ENCODE measurements at regions of chr13 and their contacts with region 1.

Region 1: DNA sequence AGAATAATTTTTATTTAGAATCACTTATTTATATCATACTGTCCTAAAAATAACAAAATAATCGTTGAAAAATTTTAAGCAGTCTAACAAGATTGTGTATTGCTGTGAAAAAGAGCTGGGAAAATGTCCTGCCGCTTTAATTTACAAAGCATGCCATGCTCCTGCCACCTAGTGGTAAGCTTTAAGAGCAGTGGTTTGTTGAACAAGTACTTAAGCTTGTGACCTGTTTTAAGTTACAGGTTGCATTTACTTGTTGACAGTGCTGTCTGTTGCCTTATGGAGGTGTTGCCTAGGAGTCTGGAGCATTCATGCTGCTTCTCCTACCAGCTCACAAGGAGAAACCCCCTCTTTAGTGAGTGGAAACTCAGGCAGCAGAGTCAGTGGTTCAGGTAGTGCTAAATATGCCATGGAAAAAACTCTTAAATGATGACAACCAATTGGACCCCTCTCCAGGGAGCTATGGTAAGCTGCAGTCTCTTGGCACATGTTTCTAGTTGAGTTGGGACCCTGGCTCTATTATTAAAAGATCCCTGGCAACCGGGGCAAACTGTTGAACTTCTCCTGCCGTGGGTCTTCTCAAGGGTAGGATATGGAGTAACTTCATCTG is 68.4 kb downstream of the SPATA13 start:
- DNase-seq: peak; percentile 67
- H3K4me3 ChIP-seq: no peak overlapping the region
- H3K27ac ChIP-seq: no peak overlapping the region
- H3K4me1 ChIP-seq: peaks cover 5% of the 10 kb centered on the region
- H3K27me3 ChIP-seq: no peaks in the 10 kb centered on the region
- CTCF ChIP-seq: peak; percentile 78 to 82
- POLR2A ChIP-seq: no peak

Region 2: GRCh38 chr13:23915308-23915707 is 313.6 kb before region 1 on chr13:
- CTCF ChIA-PET with region 1: interaction called, 20 read pairs
- POLR2A ChIA-PET with region 1: no interaction called
- dilution Hi-C with region 1: no loop called
- intact Hi-C with region 1: loop called (anchors 2 kb)
- DNase-seq: no peak
- H3K4me3 ChIP-seq: no peak overlapping the region
- H3K27ac ChIP-seq: no peak overlapping the region
- H3K4me1 ChIP-seq: no peaks in the 10 kb centered on the region
- H3K27me3 ChIP-seq: peaks cover 10 to 12% of the 10 kb centered on the region in 2 experiments
- CTCF ChIP-seq: no peak
- POLR2A ChIP-seq: no peak

Region 3: GRCh38 chr13:24020375-24020830 is 208.6 kb before region 1 on chr13:
- CTCF ChIA-PET with region 1: interaction called, 155 read pairs
- POLR2A ChIA-PET with region 1: no interaction called
- dilution Hi-C with region 1: no loop called
- intact Hi-C with region 1: loop called (anchors 2 kb)
- DNase-seq: peak; percentile 67
- H3K4me3 ChIP-seq: no peak overlapping the region
- H3K27ac ChIP-seq: no peak overlapping the region
- H3K4me1 ChIP-seq: no peaks in the 10 kb centered on the region
- H3K27me3 ChIP-seq: no peaks in the 10 kb centered on the region
- CTCF ChIP-seq: peak; percentile 62 to 74
- POLR2A ChIP-seq: no peak

Region 4: GRCh38 chr13:24027494-24027893 is 201.5 kb before region 1 on chr13:
- CTCF ChIA-PET with region 1: interaction called, 14 read pairs
- POLR2A ChIA-PET with region 1: interaction called, 3 read pairs
- dilution Hi-C with region 1: no loop called
- intact Hi-C with region 1: no loop called
- DNase-seq: no peak
- H3K4me3 ChIP-seq: no peak overlapping the region
- H3K27ac ChIP-seq: no peak overlapping the region
- H3K4me1 ChIP-seq: no peaks in the 10 kb centered on the region
- H3K27me3 ChIP-seq: peaks cover 5% of the 10 kb centered on the region in 2 experiments
- CTCF ChIP-seq: no peak
- POLR2A ChIP-seq: no peak

Region 5: GRCh38 chr13:24135674-24136300 is 93.2 kb before region 1 on chr13:
- CTCF ChIA-PET with region 1: interaction called, 11 read pairs
- POLR2A ChIA-PET with region 1: no interaction called
- dilution Hi-C with region 1: no loop called
- intact Hi-C with region 1: no loop called
- DNase-seq: no peak
- H3K4me3 ChIP-seq: no peak overlapping the region
- H3K27ac ChIP-seq: peak overlapping the region; percentile 29
- H3K4me1 ChIP-seq: peaks cover 5% of the 10 kb centered on the region
- H3K27me3 ChIP-seq: peaks cover 0 to 5% of the 10 kb centered on the region in 2 experiments
- CTCF ChIP-seq: no peak
- POLR2A ChIP-seq: no peak

Measured in endothelial cell of umbilical vein (primary cell).